ENCODE measurements at regions of chr1 and their contacts with region 1.

Region 1: GRCh38 chr1:111448918-111449702 is at the starts of genes ATP5PB and WDR77:
- DNase-seq: peak; percentile 91
- H3K4me3 Mint-ChIP-seq: peak within 1 kb of the TSS; percentile 100
- H3K27ac Mint-ChIP-seq: peak within 1 kb of the TSS; percentile 96
- H3K4me1 Mint-ChIP-seq: peaks cover 74% of the 10 kb centered on the region
- H3K27me3 Mint-ChIP-seq: no peaks in the 10 kb centered on the region
- total RNA-seq, gene ATP5PB: 280 and 282 TPM in 2 replicates
- total RNA-seq, gene WDR77: 61.3 and 62.5 TPM in 2 replicates

Region 2: GRCh38 chr1:111139956-111140679 is 309.0 kb before region 1 on chr1 and contains the starts of genes CEPT1 and DRAM2:
- intact Hi-C with region 1: loop called (anchors 1 kb)
- DNase-seq: peak; percentile 89
- H3K4me3 Mint-ChIP-seq: peak within 1 kb of the TSS; percentile 100
- H3K27ac Mint-ChIP-seq: peak within 1 kb of the TSS; percentile 100
- H3K4me1 Mint-ChIP-seq: peaks cover 40% of the 10 kb centered on the region
- H3K27me3 Mint-ChIP-seq: no peaks in the 10 kb centered on the region
- total RNA-seq, gene CEPT1: 32.5 and 37.3 TPM in 2 replicates
- total RNA-seq, gene DRAM2: 24.0 and 26.6 TPM in 2 replicates

Region 3: GRCh38 chr1:111275079-111275478 is 174.0 kb before region 1 on chr1:
- intact Hi-C with region 1: no loop called
- DNase-seq: peak; percentile 8
- H3K4me3 Mint-ChIP-seq: no peak overlapping the region
- H3K27ac Mint-ChIP-seq: peak overlapping the region; percentile 37
- H3K4me1 Mint-ChIP-seq: peaks cover 26% of the 10 kb centered on the region
- H3K27me3 Mint-ChIP-seq: peaks cover 20% of the 10 kb centered on the region

Region 4: GRCh38 chr1:111406321-111406768 is 42.8 kb before region 1 on chr1:
- intact Hi-C with region 1: loop called (anchors 2 kb)
- DNase-seq: peak; percentile 46
- H3K4me3 Mint-ChIP-seq: no peak overlapping the region
- H3K27ac Mint-ChIP-seq: no peak overlapping the region
- H3K4me1 Mint-ChIP-seq: peaks cover 20% of the 10 kb centered on the region
- H3K27me3 Mint-ChIP-seq: peaks cover 13% of the 10 kb centered on the region

Region 5: DNA sequence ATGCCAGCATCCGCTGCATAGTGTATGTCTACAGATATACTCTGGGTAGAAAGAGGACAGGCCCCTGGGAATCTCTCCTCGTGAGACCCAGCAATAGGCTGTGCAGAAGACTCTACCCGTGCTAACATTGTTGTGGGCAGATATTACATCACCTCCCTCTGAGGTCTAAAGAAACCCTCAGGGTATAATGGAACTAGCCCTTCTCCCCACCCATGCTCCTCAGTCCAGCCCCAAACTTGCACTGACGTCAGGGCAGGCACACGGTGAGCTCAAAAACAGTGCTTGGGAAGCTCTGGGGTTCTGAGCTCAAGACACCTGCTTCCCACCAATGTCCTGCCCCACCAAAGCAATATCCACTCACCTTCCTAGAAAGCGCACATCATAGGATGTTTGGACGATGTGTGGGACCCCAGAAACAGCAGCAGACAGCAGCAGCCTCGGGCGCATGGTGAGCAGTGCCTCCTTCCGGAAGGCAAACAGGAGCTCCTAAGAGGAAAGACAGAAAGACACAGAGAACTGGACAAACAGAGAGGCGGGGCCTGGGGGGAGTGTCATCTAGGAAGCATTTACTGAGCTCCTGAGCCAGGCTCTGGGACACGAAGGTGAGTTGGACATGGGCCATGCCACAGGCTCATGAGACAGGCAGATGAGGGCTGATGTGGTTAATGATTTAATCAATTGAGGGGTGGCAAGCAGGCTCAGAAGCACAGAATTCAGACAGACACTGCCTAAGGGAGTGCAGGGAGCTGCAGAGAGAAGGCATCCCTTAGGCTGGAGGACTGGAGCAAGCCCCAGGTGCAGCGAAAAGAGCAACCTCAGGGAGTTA is 26.3 kb before region 1 on chr1:
- intact Hi-C with region 1: no loop called
- DNase-seq: no peak
- H3K4me3 Mint-ChIP-seq: no peak overlapping the region
- H3K27ac Mint-ChIP-seq: no peak overlapping the region
- H3K4me1 Mint-ChIP-seq: no peaks in the 10 kb centered on the region
- H3K27me3 Mint-ChIP-seq: peaks cover 15% of the 10 kb centered on the region

Region 6: DNA sequence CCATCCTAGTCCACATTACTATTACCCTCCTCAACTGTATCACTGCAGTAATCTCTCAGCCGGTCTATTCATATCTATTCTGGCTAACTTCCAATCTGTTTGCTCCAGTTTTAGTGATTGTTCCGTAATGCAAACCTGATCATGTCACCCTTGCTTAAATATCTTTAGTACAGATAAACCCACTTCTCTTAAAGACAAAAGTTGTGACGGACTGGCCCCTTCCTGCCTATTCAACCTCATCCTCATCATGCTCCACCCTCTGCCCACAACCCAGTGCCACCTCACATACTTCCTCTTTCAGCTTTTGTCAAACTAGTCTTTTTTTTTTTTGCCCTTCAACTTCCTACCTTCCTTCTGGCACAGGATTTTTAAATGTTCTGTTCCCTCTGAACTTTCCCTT is 21.9 kb after region 1 on chr1:
- intact Hi-C with region 1: loop called (anchors 2 kb)
- DNase-seq: peak; percentile 49
- H3K4me3 Mint-ChIP-seq: no peak overlapping the region
- H3K27ac Mint-ChIP-seq: no peak overlapping the region
- H3K4me1 Mint-ChIP-seq: peaks cover 23% of the 10 kb centered on the region
- H3K27me3 Mint-ChIP-seq: peaks cover 3% of the 10 kb centered on the region

Region 7: DNA sequence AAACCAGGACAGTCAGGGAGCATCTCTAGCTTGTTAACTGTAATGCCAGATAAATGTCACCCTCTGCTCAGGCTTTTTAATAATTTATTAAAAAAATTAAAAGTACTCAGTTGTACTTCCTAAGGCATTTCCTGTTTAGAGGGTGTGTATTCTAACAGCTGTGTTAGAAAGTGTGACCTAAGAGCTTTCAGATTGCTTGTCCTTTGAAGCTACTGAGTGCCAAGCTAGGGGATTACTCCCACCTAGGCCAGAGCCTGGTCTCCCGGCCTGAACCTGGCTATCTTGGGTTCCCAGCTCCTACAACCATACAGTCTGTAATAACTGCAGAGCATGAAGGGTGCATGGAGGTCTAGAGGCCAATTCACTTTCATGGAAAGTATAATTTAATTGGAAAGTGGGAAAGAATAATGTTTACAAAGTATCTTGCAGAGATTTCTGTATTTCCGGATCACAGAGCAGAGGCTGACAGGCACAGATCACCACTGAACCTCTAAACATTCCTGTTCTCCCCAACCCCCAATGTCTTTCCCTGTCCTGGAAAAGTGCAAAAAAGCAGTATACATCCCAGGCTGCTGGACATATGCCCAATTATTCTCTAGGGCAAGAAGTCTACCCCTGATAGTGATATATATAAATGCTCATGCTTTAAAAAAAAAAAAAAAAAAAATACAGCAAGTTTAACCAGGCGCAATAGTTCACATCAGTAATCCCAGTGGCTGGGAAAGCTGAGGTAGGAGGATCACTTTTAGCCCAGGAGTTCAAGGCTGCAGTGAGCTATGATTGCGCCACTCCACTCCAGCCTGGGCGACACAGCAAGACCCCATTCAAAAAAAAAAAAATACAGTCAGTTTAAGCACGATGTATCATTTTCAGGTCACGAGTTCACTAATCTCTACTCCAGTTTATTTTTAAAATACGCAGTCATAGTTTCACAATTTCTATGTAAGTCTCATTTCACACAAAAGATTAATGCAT is 133.8 kb after region 1 on chr1:
- intact Hi-C with region 1: no loop called
- DNase-seq: no peak
- H3K4me3 Mint-ChIP-seq: no peak overlapping the region
- H3K27ac Mint-ChIP-seq: no peak overlapping the region
- H3K4me1 Mint-ChIP-seq: peaks cover 11% of the 10 kb centered on the region
- H3K27me3 Mint-ChIP-seq: no peaks in the 10 kb centered on the region

Measured in activated T-helper 1 cell treated with anti-CD3 and anti-CD28 coated beads, Interleukin-12 subunit alpha, Interleukin-12 subunit beta, Interleukin-2, Interleukin-4 antibody, amounts not matched to agents 30 ng/mL and 10 ng/mL and 1 ng/mL, durations not matched to agents 14 hours and 24 hours and 36 hours (primary cell).